ENCODE measurements at regions of chr2 and their contacts with region 1.

Region 1: DNA sequence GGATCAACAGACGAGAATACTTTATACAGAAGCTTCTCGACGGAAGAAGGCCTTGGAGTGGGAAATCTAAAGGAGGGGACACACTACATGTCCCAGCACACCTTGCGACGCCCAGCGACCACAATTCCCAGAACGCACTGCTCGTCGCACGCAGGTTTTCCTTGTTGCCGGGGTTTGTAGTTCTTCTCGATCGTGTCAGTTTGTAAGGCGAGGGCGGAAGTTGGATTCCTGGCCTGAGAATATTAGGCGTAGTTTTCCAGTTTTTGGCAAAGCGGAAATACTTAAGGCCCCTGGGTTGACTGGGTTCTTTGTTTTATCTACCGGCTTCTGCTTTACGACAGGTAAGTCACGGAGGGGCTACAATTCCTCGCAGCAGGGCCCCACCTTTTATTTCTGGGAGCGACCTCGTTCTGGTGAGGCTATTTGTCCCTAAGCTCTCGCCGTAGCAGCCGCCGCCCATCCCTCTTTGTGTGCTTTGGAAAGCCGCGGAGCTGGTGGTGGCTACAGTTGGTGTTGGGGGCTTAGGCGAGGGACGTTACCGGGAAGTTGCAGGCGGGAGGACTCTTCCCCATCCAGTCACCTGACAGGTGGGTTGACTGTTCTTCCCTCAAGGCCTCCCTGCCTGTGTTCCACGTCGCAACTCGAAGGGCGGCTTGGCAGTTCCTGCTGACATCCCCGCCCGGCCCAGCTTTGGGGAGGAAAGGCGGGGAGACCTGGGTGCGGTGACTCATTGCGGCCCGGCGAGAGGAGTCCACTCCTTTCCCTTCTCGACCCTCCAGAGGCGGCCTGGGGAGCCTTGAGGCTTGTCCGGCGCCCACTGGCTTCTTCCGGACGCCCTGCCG is at the start of gene DYNC1I2:
- DNase-seq: peak; percentile 38 to 82 (median 79)
- ATAC-seq: peak; percentile 90
- H3K4me3 ChIP-seq: peak within 1 kb of the TSS; percentile 96
- H3K4me3 Mint-ChIP-seq: peak within 1 kb of the TSS; percentile 89 to 98 (median 93)
- H3K27ac ChIP-seq: peak within 1 kb of the TSS; percentile 67
- H3K27ac Mint-ChIP-seq: peak within 1 kb of the TSS; percentile 77 to 95 (median 85)
- H3K4me1 ChIP-seq: peaks cover 7 to 10% of the 10 kb centered on the region in 2 donors
- H3K4me1 Mint-ChIP-seq: peaks cover 11 to 43% (median 24%) of the 10 kb centered on the region in 7 donors
- H3K27me3 ChIP-seq: no peaks in the 10 kb centered on the region
- H3K27me3 Mint-ChIP-seq: peaks cover 0 to 21% (median 0%) of the 10 kb centered on the region in 5 donors
- total RNA-seq, gene DYNC1I2: 21.5 to 57.0 (median 41.7) TPM

Region 2: GRCh38 chr2:171574149-171574795 is 113.2 kb before region 1 on chr2:
- CTCF ChIA-PET with region 1: no interaction called
- POLR2A ChIA-PET with region 1: no interaction called
- intact Hi-C with region 1: loop called in 1 of 2 experiments (anchors 5 kb)
- DNase-seq: peak; percentile 50 to 84 (median 73)
- ATAC-seq: peak; percentile 99
- H3K4me3 ChIP-seq: no peak overlapping the region
- H3K4me3 Mint-ChIP-seq: peak overlapping the region in 6 of 10 donors; percentile 13 to 69 (median 16)
- H3K27ac ChIP-seq: no peak overlapping the region
- H3K27ac Mint-ChIP-seq: peak overlapping the region in 2 of 9 donors; percentile 31 to 60
- H3K4me1 ChIP-seq: peaks cover 0 to 3% of the 10 kb centered on the region in 2 donors
- H3K4me1 Mint-ChIP-seq: peaks cover 0 to 7% (median 6%) of the 10 kb centered on the region in 7 donors
- H3K27me3 ChIP-seq: no peaks in the 10 kb centered on the region
- H3K27me3 Mint-ChIP-seq: peaks cover 0 to 8% (median 0%) of the 10 kb centered on the region in 5 donors

Region 3: DNA sequence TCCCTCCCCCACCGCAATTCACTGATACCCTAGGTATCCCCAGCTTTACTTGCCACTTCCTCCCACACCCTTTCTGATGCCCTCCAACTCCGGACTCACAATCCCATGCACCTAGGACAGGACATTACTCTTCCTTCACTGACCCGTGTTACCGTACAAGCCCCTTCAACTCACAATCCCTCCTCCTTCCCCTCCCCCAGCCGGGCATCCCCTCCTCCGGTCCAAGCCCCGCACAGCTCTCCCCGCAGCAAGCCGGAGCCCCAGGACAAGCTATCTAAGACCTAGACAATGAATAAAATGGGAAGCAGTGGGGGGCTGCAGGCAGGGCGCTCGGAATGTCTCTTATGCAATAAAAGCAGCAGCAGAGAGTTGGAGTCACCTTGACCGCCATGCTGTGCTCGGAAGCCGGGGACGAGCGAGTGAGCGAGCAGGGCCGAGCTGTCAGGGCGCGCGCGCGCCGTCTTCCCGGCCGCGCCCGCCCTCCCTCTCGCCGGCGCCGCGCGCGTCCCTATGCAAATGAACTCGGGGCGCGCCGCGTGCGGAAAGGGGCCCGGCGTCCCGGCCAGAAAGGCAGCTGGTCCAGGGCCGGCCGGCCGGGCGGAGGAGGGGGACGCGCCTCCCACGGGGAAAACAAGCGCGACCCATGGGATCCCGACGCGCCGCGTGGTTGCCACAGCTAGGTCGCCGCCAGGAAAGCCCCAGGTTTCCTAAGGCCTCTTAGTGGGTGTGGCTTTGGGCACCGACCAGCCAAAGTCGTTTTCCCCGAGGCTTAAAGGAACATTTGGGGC is 206.5 kb after region 1 on chr2 and contains the start of gene SLC25A12:
- CTCF ChIA-PET with region 1: no interaction called
- POLR2A ChIA-PET with region 1: no interaction called
- intact Hi-C with region 1: loop called (anchors 1 to 2 kb)
- DNase-seq: peak; percentile 53 to 79 (median 65)
- ATAC-seq: peak; percentile 96
- H3K4me3 ChIP-seq: peak within 1 kb of the TSS; percentile 93
- H3K4me3 Mint-ChIP-seq: peak within 1 kb of the TSS; percentile 93 to 98 (median 96)
- H3K27ac ChIP-seq: peak within 1 kb of the TSS; percentile 83
- H3K27ac Mint-ChIP-seq: peak within 1 kb of the TSS; percentile 66 to 94 (median 89)
- H3K4me1 ChIP-seq: peaks cover 11 to 17% of the 10 kb centered on the region in 2 donors
- H3K4me1 Mint-ChIP-seq: peaks cover 31 to 61% (median 52%) of the 10 kb centered on the region in 7 donors
- H3K27me3 ChIP-seq: no peaks in the 10 kb centered on the region
- H3K27me3 Mint-ChIP-seq: peaks cover 0 to 6% (median 0%) of the 10 kb centered on the region in 5 donors
- total RNA-seq, gene SLC25A12: 12.7 to 33.6 (median 14.0) TPM

Region 4: DNA sequence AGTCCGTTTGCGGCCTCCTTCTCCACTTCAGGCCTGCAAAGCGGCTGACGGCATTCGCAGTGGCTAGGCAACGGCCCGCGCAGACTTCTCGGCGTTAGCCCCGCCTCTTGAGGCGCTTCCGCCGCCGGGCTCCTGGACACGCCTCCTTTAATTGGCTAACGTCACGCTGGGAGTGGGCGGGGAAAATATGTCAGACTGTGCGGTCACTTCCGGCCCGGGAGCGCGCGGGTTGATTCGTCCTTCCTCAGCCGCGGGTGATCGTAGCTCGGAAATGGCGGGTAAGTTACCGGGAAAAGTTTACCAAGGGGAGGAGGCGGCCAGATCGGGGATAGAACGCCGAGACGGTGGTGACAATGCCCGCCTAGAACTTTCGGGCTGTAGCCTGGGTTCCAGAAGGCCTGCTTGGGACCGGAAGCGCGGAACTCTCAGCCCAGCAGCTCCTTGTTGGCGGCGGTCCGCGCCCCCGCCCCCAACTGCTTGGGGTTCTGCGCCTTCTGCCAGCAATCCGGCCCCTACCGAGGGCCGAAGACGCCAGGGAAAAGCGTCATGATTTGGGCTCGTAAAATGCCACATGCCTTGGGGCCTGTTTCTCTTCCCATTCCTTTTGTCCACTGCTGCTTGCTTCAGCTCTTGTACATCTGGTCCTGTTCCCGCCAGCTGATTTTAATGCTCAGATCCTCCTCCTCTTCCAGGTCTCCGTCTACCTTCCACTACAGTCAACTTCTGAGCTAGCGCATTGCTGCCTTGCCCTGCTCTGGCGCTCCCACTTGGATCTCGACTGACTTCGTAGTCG is 234.9 kb after region 1 on chr2 and contains the start of gene HAT1:
- CTCF ChIA-PET with region 1: no interaction called
- POLR2A ChIA-PET with region 1: interaction called, 3 read pairs
- intact Hi-C with region 1: loop called (anchors 1 kb)
- DNase-seq: peak; percentile 92 to 98 (median 97)
- ATAC-seq: peak; percentile 99
- H3K4me3 ChIP-seq: peak within 1 kb of the TSS; percentile 75
- H3K4me3 Mint-ChIP-seq: peak within 1 kb of the TSS; percentile 90 to 100 (median 99)
- H3K27ac ChIP-seq: peak within 1 kb of the TSS; percentile 93
- H3K27ac Mint-ChIP-seq: peak within 1 kb of the TSS; percentile 96 to 100 (median 99)
- H3K4me1 ChIP-seq: peaks cover 13 to 17% of the 10 kb centered on the region in 2 donors
- H3K4me1 Mint-ChIP-seq: peaks cover 20 to 50% (median 42%) of the 10 kb centered on the region in 7 donors
- H3K27me3 ChIP-seq: no peaks in the 10 kb centered on the region
- H3K27me3 Mint-ChIP-seq: no peaks in the 10 kb centered on the region
- total RNA-seq, gene HAT1: 22.1 to 55.4 (median 26.4) TPM

Region 5: GRCh38 chr2:171999604-172000469 is 312.3 kb after region 1 on chr2 and contains the start of gene METAP1D:
- CTCF ChIA-PET with region 1: no interaction called
- POLR2A ChIA-PET with region 1: no interaction called
- intact Hi-C with region 1: loop called in 1 of 2 experiments (anchors 5 kb)
- DNase-seq: peak; percentile 74 to 92 (median 82)
- ATAC-seq: peak; percentile 98
- H3K4me3 ChIP-seq: peak within 1 kb of the TSS; percentile 99
- H3K4me3 Mint-ChIP-seq: peak within 1 kb of the TSS; percentile 87 to 99 (median 96)
- H3K27ac ChIP-seq: peak within 1 kb of the TSS; percentile 61
- H3K27ac Mint-ChIP-seq: peak within 1 kb of the TSS; percentile 77 to 97 (median 93)
- H3K4me1 ChIP-seq: peaks cover 0 to 5% of the 10 kb centered on the region in 2 donors
- H3K4me1 Mint-ChIP-seq: peaks cover 5 to 24% (median 22%) of the 10 kb centered on the region in 7 donors
- H3K27me3 ChIP-seq: no peaks in the 10 kb centered on the region
- H3K27me3 Mint-ChIP-seq: peaks cover 6 to 23% (median 9%) of the 10 kb centered on the region in 5 donors
- total RNA-seq, gene METAP1D: 5.3 to 12.2 (median 11.6) TPM

Region 6: GRCh38 chr2:172427256-172427989 is 739.9 kb after region 1 on chr2 and contains the start of gene ITGA6:
- CTCF ChIA-PET with region 1: no interaction called
- POLR2A ChIA-PET with region 1: no interaction called
- intact Hi-C with region 1: loop called in 1 of 2 experiments (anchors 5 kb)
- DNase-seq: peak; percentile 55 to 84 (median 80)
- ATAC-seq: peak; percentile 81
- H3K4me3 ChIP-seq: peak within 1 kb of the TSS; percentile 76
- H3K4me3 Mint-ChIP-seq: peak within 1 kb of the TSS in 7 of 10 donors; percentile 92 to 100 (median 98)
- H3K27ac ChIP-seq: peak within 1 kb of the TSS; percentile 76
- H3K27ac Mint-ChIP-seq: peak within 1 kb of the TSS in 8 of 9 donors; percentile 90 to 96 (median 95)
- H3K4me1 ChIP-seq: peaks cover 17 to 44% of the 10 kb centered on the region in 2 donors
- H3K4me1 Mint-ChIP-seq: peaks cover 21 to 65% (median 46%) of the 10 kb centered on the region in 7 donors
- H3K27me3 ChIP-seq: no peaks in the 10 kb centered on the region
- H3K27me3 Mint-ChIP-seq: peaks cover 0 to 82% (median 0%) of the 10 kb centered on the region in 5 donors
- total RNA-seq, gene ITGA6: 13.1 to 179 (median 135) TPM

Measured in naive thymus-derived CD4-positive, alpha-beta T cell (primary cell).